ENCODE measurements at regions of chr22 and their contacts with region 1.

Region 1: DNA sequence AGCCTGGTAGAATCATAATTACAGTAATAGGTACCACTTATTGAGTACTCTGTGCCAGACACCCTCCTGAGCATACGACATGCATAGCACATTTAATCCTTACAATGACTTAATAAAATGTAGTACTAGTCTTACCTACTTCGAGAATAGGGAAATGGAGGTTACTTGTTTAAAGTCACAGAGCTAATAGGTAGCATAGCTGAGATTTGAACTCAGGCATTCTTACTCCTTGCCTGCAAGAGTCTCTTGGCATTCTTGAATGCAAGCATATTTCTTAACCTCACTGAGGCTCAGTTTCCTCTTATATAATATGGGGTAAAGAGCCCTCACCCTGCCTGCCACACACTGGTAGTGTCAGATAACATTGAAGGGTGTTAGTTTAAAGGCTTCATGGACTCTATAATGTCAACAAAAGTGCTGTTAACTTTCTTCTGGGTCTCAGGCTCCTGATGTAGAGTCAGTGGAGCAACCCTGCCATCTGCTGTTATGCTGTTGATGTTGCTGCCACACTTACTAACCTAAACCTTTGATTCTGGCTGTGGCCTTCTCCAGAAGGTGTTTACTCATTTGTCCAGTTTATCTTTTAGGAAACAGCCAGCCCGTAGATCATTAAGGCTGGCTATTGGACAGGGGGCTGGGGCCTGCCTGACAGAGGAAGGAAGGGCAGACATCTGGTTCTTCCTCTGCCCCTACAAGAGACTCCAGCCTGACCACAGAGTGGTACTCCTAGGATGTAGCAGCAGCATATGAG is 18.9 kb downstream of the LIMK2 start:
- DNase-seq: peak; percentile 74
- ATAC-seq: peak; percentile 96
- H3K4me3 ChIP-seq: no peak overlapping the region
- H3K27ac ChIP-seq: no peak overlapping the region
- H3K4me1 ChIP-seq: peaks cover 15% of the 10 kb centered on the region
- H3K27me3 ChIP-seq: no peaks in the 10 kb centered on the region
- CTCF ChIP-seq: peak; percentile 91
- POLR2A ChIP-seq: peak; percentile 40; the same call in 1 of the 2 replicates
- RAD21 ChIP-seq: peak; percentile 93

Region 2: DNA sequence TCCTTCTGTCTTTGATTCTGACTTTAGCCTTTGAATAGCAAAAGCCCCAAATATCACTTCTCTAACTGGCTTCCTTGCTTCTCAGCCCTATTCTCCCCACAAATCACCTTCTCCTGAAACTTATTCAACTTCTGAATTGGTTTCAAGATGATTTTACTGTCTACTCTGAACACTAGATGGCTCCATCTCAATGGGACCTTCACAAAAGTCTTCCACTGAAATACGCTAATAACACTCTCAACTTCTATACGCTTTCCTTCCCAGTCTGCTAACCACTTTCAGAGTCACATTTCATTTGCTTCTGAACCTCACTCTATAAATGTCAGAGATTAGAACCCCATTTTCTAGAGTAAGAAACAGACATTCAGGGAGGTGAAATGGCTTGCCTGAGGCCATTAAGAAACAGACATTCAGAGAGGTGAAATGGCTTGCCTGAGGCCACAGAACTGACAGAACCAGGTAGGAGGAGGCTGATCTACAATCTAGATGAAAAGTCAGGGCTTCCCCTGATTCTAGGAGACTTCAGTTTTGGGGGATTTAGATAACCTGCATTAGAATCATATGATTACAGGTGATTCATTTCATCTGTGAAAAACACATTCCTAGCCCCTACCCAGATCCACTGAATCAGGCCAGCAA is 283.1 kb before region 1 on chr22:
- CTCF ChIA-PET with region 1: no interaction called
- POLR2A ChIA-PET with region 1: no interaction called
- dilution Hi-C with region 1: no loop called
- in situ Hi-C with region 1: loop called (anchors 10 kb)
- intact Hi-C with region 1: loop called (anchors 2 kb)
- DNase-seq: peak; percentile 70
- ATAC-seq: peak; percentile 67
- H3K4me3 ChIP-seq: no peak overlapping the region
- H3K27ac ChIP-seq: no peak overlapping the region
- H3K4me1 ChIP-seq: peaks cover 2% of the 10 kb centered on the region
- H3K27me3 ChIP-seq: no peaks in the 10 kb centered on the region
- CTCF ChIP-seq: peak; percentile 67
- POLR2A ChIP-seq: no peak
- RAD21 ChIP-seq: peak; percentile 73

Region 3: GRCh38 chr22:31107178-31107893 is 123.7 kb before region 1 on chr22 and contains the start of gene SELENOM:
- CTCF ChIA-PET with region 1: interaction called, 4 read pairs
- POLR2A ChIA-PET with region 1: no interaction called
- dilution Hi-C with region 1: no loop called
- in situ Hi-C with region 1: loop called (anchors 10 kb)
- intact Hi-C with region 1: loop called (anchors 1 kb)
- DNase-seq: peak; percentile 98
- ATAC-seq: peak; percentile 88
- H3K4me3 ChIP-seq: peak within 1 kb of the TSS; percentile 90
- H3K27ac ChIP-seq: peak within 1 kb of the TSS; percentile 94
- H3K4me1 ChIP-seq: peaks cover 35% of the 10 kb centered on the region
- H3K27me3 ChIP-seq: no peaks in the 10 kb centered on the region
- CTCF ChIP-seq: peak; percentile 99
- POLR2A ChIP-seq: peak; percentile 95
- RAD21 ChIP-seq: peak; percentile 95
- total RNA-seq, gene SELENOM: 36.1 and 46.2 TPM in 2 replicates

Region 4: GRCh38 chr22:31148953-31149627 is 82.0 kb before region 1 on chr22:
- CTCF ChIA-PET with region 1: no interaction called
- POLR2A ChIA-PET with region 1: no interaction called
- dilution Hi-C with region 1: no loop called
- in situ Hi-C with region 1: no loop called
- intact Hi-C with region 1: loop called (anchors 2 kb)
- DNase-seq: peak; percentile 80
- ATAC-seq: peak; percentile 99
- H3K4me3 ChIP-seq: no peak overlapping the region
- H3K27ac ChIP-seq: peak overlapping the region; percentile 9; the same call in 1 of the 2 replicates
- H3K4me1 ChIP-seq: peaks cover 5% of the 10 kb centered on the region
- H3K27me3 ChIP-seq: no peaks in the 10 kb centered on the region
- CTCF ChIP-seq: peak; percentile 98
- POLR2A ChIP-seq: no peak
- RAD21 ChIP-seq: peak; percentile 97

Region 5: GRCh38 chr22:31211862-31212730 is 18.9 kb before region 1 on chr22 and contains the start of gene LIMK2:
- CTCF ChIA-PET with region 1: interaction called, 3 read pairs
- POLR2A ChIA-PET with region 1: no interaction called
- dilution Hi-C with region 1: no loop called
- in situ Hi-C with region 1: no loop called
- intact Hi-C with region 1: loop called (anchors 2 kb)
- DNase-seq: peak; percentile 73
- ATAC-seq: peak; percentile 99
- H3K4me3 ChIP-seq: peak within 1 kb of the TSS; percentile 80
- H3K27ac ChIP-seq: peak within 1 kb of the TSS; percentile 30
- H3K4me1 ChIP-seq: peaks cover 4% of the 10 kb centered on the region; the same call in 1 of the 2 replicates
- H3K27me3 ChIP-seq: no peaks in the 10 kb centered on the region
- CTCF ChIP-seq: peak; percentile 92
- POLR2A ChIP-seq: no peak
- RAD21 ChIP-seq: peak; percentile 70
- total RNA-seq, gene LIMK2: 25.0 and 31.9 TPM in 2 replicates